Activated CD4-positive, alpha-beta memory T cell treated with anti-CD3 and anti-CD28 coated beads, Interleukin-2, amount 10 ng/mL, durations not matched to agents 7 days and 5 days (primary cell): ENCODE measurements at regions of chr1 and their contacts with region 1.

Region 1: DNA sequence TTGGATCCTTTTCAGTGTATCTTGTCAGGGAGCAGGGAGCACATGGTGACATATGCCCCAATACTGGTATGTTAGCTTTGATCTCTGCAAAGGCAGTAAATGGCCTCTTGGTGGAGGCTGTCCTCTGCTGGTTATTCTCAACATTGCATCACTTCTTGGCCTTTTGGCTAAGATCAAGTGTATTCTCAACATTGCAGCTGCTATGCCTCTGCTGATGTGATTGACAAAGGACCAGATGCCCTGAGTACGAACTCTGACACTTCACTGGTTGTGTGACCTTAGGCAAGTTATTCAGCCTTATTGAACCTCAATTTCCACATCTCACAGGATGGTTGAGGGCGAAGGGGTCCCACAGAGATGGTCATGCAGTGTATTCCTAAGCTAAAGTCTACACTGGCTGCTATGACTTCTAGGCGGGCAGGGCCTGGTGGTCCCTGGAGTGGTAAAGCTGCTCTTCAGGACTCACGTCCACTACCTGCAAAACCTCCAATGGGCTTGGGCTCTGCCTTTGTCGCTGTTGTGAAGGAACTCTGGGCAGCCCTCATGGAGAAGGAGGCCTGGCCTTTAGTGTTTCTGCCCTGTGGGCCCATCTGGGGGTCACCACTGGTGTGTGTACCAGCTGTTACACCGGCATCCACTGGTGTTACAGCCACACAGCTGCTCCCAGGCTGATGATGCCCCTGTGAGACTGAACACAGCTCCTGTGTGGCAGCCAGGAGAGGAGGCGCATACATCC is 64.8 kb downstream of the DNTTIP2 start:
- DNase-seq: peak; percentile 63
- H3K4me3 Mint-ChIP-seq: no peak overlapping the region
- H3K27ac Mint-ChIP-seq: no peak overlapping the region
- H3K4me1 Mint-ChIP-seq: peaks cover 30% of the 10 kb centered on the region
- H3K27me3 Mint-ChIP-seq: peaks cover 2% of the 10 kb centered on the region

Region 2: GRCh38 chr1:93629099-93630059 is 184.8 kb before region 1 on chr1:
- CTCF ChIA-PET with region 1: interaction called, 314 read pairs
- POLR2A ChIA-PET with region 1: interaction called, 10 read pairs
- DNase-seq: peak; percentile 47
- H3K4me3 Mint-ChIP-seq: no peak overlapping the region
- H3K27ac Mint-ChIP-seq: no peak overlapping the region
- H3K4me1 Mint-ChIP-seq: peaks cover 11% of the 10 kb centered on the region
- H3K27me3 Mint-ChIP-seq: no peaks in the 10 kb centered on the region

Region 3: GRCh38 chr1:93680757-93681550 is 133.3 kb before region 1 on chr1:
- CTCF ChIA-PET with region 1: interaction called, 20 read pairs
- POLR2A ChIA-PET with region 1: interaction called, 3 read pairs
- DNase-seq: peak; percentile 65
- H3K4me3 Mint-ChIP-seq: peak overlapping the region; percentile 81
- H3K27ac Mint-ChIP-seq: no peak overlapping the region
- H3K4me1 Mint-ChIP-seq: peaks cover 27% of the 10 kb centered on the region
- H3K27me3 Mint-ChIP-seq: peaks cover 66% of the 10 kb centered on the region

Region 4: GRCh38 chr1:93715529-93716126 is 98.6 kb before region 1 on chr1:
- CTCF ChIA-PET with region 1: interaction called, 10 read pairs
- POLR2A ChIA-PET with region 1: no interaction called
- DNase-seq: peak; percentile 55
- H3K4me3 Mint-ChIP-seq: no peak overlapping the region
- H3K27ac Mint-ChIP-seq: peak overlapping the region; percentile 81
- H3K4me1 Mint-ChIP-seq: peaks cover 66% of the 10 kb centered on the region
- H3K27me3 Mint-ChIP-seq: peaks cover 5% of the 10 kb centered on the region

Region 5: GRCh38 chr1:93839307-93839706 is 25.1 kb after region 1 on chr1:
- CTCF ChIA-PET with region 1: interaction called, 70 read pairs
- POLR2A ChIA-PET with region 1: interaction called, 8 read pairs
- DNase-seq: no peak
- H3K4me3 Mint-ChIP-seq: no peak overlapping the region
- H3K27ac Mint-ChIP-seq: no peak overlapping the region
- H3K4me1 Mint-ChIP-seq: peaks cover 2% of the 10 kb centered on the region
- H3K27me3 Mint-ChIP-seq: peaks cover 8% of the 10 kb centered on the region

Region 6: DNA sequence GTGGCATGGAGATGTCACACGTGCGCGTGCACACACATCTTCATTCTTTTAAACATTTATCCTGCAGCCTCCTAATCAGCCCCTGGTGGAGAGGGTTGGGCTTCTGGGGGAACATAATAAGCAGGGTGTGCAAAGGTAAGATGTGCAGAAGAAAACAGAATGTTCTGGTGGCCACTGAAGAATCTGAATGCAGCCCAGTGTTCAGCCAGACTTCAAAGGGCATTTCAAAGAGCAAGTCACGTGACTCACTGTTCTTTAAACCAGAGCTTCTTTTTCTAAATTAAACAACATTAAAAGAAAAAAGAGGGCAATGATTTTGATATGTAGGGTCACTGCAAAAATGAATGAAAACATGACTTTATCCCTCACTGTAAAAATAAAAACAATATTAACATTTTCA is 216.9 kb after region 1 on chr1:
- CTCF ChIA-PET with region 1: no interaction called
- POLR2A ChIA-PET with region 1: no interaction called
- DNase-seq: no peak
- H3K4me3 Mint-ChIP-seq: no peak overlapping the region
- H3K27ac Mint-ChIP-seq: no peak overlapping the region
- H3K4me1 Mint-ChIP-seq: peaks cover 5% of the 10 kb centered on the region
- H3K27me3 Mint-ChIP-seq: peaks cover 20% of the 10 kb centered on the region